GM10248 (cell line): ENCODE measurements at regions of chr17 and their contacts with region 1.

Region 1: DNA sequence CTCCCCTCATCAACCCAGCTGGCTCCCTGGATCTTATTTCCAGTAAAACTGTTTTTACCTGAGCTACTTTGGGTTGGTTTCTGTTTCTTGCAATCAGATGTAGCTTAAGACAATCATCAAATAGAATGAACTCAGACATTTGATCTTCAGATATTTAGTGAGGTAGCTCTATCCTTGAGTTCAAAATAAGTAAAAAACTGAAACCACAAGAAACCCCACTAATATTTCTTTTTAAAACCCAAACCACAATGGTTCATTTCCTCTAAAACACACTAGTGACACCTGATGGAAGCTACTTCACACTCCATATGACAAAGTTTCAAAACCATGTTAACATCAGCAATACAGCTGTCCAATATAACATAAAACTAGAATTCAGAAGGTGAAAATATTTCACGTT is 37.8 kb downstream of the CACNG1 start:
- DNase-seq: peak; percentile 60
- CTCF ChIP-seq: peak; percentile 33

Region 2: GRCh38 chr17:66975604-66976384 is 106.3 kb before region 1 on chr17:
- CTCF ChIA-PET with region 1: no interaction called
- POLR2A ChIA-PET with region 1: no interaction called
- DNase-seq: peak; percentile 43
- CTCF ChIP-seq: no peak

Region 3: DNA sequence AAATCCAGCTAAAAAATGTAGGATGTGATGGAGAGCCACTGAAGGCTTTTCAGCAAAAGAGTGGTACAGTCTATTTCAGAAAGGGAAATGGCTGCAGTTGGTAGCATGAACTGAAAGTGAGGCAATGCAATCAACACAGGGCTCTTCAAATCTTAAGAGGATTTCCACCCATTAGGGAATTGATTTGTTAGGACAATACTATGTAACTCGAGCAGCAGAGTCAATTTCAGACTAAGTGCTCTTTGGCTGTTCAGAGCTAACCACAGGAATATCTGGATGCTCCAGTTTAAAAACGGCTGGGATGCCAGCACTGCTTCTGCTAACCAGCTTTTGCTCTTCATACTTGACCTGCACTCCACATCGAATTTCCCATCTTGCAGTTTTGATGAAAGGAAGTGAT is 13.1 kb before region 1 on chr17:
- CTCF ChIA-PET with region 1: interaction called, 17 read pairs
- POLR2A ChIA-PET with region 1: no interaction called
- DNase-seq: no peak
- CTCF ChIP-seq: no peak